OCI-LY7 (cell line): ENCODE measurements at regions of chr15 and their contacts with region 1.

Region 1: GRCh38 chr15:48810414-48811317 is at the start of gene CEP152:
- DNase-seq: peak; percentile 100
- H3K4me3 ChIP-seq: peak within 1 kb of the TSS; percentile 94
- H3K27ac ChIP-seq: peak within 1 kb of the TSS; percentile 78
- H3K4me1 ChIP-seq: peaks cover 39% of the 10 kb centered on the region
- CTCF ChIP-seq: no peak
- total RNA-seq, gene CEP152: 37.6 and 68.2 TPM in 2 replicates

Region 2: DNA sequence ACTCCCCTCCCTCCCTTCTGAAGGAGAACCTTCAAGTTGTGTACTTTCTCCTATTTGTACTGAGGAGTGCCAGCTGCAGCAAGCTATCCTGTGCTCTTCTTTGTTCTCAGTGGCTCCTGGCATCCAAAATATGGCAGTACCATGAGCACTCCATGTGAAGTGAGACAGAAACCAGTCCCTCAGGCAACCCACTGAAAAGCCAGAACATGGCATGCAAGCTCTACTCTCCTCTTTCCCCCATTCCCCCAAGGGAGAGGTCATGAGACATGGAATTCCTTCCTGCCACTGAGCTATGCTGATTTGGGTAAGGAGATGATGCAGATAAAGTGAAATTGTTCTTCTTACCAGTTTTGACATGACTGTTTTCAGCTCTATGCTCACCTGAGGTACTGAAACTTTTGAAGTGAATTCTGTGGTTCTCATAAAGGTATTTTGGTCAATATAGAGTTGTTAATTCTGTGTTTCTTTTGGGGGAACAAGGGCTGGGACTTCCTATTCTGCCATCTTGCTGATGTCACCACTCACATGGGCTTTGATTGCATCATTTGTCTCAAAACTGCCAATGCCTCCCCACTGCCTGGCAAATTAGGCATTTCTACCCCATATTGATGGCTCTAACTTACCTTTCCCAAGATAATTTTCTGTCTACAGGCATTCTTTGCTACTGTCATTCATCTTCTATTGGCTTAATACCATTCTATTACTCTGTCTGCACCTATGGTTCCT is 23.0 kb after region 1 on chr15:
- CTCF ChIA-PET with region 1: no interaction called
- POLR2A ChIA-PET with region 1: interaction called, 11 read pairs
- intact Hi-C with region 1: no loop called
- DNase-seq: no peak
- H3K4me3 ChIP-seq: no peak overlapping the region
- H3K27ac ChIP-seq: no peak overlapping the region
- H3K4me1 ChIP-seq: no peaks in the 10 kb centered on the region
- CTCF ChIP-seq: no peak

Region 3: DNA sequence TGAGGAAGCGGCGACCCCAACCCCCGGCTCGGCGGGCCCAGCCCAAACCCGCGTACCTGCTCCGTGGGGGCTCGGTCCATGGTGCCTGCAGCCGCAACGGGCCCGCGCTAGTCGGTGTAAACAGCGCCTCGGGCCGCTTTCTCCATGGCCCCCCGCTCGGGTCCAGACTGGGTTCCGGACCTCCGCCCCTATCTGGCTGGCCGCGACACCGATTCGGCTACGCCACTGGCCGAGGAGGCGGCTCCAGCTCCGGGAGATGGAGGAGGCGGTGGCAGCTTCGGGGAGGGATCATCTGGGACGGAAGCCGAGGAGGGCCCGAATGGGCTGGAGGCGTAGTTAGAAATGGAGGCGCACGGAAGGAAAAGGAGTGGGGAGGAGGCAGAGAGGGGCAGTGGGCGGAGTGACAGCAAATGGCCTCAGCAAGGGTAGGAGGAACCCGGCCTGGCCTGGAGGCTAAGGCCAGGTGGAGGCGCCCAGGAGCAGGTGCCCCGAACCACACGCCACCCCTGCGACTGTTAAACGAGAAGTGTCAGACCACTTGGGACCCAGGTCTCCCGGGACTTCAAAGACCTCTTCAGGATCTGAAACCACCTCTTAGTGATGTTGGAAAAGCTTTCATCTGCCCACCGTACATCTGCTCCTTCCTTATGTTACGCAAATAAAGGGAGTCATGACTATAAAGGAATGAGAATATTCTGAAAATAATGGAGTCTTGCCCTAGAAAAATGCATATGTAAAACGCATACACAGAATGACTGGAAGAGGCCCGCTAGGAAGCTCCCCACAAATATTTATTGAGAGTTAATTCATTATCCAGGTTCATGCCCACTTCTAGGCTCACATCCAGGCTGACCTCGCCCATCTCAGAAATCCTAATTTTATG is 235.8 kb after region 1 on chr15 and contains the start of gene SECISBP2L:
- CTCF ChIA-PET with region 1: no interaction called
- POLR2A ChIA-PET with region 1: interaction called, 3 read pairs
- intact Hi-C with region 1: loop called (anchors 5 kb)
- DNase-seq: peak; percentile 93
- H3K4me3 ChIP-seq: peak within 1 kb of the TSS; percentile 86
- H3K27ac ChIP-seq: peak within 1 kb of the TSS; percentile 62
- H3K4me1 ChIP-seq: peaks cover 23% of the 10 kb centered on the region
- CTCF ChIP-seq: peak; percentile 78
- total RNA-seq, gene SECISBP2L: 13.3 and 15.4 TPM in 2 replicates